ENCODE measurements at regions of chr9 and their contacts with region 1.

Region 1: DNA sequence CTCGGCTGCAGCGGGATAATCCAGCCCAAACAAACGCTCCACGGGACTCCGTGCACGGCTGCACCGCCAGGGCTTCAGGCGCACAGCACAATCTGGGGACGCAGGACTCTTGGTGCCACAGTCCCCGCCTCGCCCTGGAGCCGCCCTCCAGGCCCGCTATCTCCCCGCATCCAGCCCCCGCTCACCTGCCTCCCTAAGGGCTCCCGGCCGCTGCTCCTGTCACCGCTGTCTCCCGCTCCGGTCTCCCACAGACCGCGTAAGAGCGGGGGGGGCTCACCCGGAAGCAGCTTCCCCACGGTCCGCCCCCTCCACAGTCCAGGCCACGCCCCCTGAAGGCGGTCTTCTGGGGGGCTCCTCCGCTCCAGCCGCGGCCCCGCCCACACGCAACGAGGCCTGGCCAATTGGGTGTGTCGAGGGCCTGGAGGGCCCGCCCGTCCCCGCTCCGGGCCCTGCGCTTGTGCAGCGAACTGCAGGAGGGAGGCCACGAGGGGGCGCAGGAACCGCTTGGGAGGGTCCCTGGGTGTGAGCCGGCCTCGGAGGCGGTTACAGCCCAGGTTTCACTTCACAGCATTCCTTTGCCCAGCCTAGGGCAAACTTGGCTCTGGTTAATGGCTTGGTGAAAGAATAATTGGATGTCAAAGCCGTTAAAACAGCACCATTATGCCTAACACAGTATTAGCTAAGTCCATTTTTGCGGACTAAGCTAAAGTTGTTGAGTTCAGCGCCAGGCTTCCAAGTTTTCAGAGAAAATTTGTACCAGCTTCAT is at the start of gene ALAD:
- DNase-seq: peak; percentile 99
- H3K4me3 ChIP-seq: peak within 1 kb of the TSS; percentile 65 to 89
- H3K27ac ChIP-seq: peak within 1 kb of the TSS; percentile 54 to 76
- H3K4me1 ChIP-seq: no peaks in the 10 kb centered on the region
- H3K27me3 ChIP-seq: no peaks in the 10 kb centered on the region
- CTCF ChIP-seq: peak; percentile 91 to 98 (median 94)
- POLR2A ChIP-seq: peak; percentile 69
- total RNA-seq, gene ALAD: 59.8 to 103 TPM

Region 2: DNA sequence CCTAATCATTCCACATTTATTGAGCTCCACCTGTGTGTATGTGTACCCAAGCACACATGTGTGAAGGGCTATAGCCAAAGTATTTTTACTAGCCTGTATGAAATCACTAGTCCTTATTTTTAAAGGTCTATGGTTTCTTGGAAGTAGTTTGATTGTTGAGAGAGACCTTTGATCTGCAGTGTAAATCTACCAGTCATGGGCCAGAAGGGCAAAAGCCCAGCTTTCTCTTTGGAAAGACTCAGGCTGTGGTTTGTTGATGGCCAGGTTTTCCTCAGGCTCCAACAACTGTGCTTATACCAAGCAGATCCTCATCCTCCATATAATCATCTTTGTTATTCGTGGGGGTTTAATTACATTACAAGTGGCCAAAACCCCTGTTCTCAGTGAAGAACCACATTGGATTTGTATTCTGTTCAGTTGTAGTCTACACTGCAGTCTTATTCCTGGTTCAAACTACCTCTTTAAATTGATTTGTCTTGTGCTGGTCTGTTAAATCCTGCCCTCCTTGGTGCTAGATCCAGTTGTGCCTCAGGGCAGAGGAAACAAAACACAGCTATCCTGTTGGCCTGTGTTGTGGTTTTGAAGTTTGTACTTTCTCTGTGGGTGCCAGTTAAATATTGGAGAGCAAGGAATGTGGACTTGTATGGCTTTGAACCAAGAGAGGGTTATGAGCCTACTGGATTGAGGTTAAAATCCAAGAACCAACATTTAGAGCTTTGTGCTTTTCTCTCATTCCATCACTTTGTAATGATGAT is 139.1 kb before region 1 on chr9:
- intact Hi-C with region 1: no loop called
- DNase-seq: peak; percentile 13
- H3K4me3 ChIP-seq: no peak overlapping the region
- H3K27ac ChIP-seq: peak overlapping the region in 1 of 2 donors; percentile 30
- H3K4me1 ChIP-seq: no peaks in the 10 kb centered on the region
- H3K27me3 ChIP-seq: no peaks in the 10 kb centered on the region
- CTCF ChIP-seq: no peak
- POLR2A ChIP-seq: no peak

Region 3: DNA sequence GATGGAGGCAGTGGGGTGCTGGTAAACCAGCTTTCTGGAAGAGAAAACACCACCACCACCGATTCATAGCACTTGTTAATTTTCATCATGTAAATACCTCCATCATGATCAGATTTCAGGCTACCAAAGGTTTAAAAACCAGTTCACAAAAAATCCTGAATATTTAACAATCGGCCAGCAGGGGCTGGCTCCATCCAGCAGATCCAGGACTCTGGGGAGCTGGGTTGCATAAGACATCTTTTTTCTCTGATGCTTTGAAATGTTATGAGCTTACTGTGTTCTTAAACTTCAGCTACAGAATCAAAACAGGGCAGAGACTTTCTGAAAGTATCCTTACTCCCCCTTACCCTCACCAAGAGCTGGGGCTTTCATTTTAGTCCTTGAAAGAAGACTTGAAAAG is 83.4 kb before region 1 on chr9:
- intact Hi-C with region 1: loop called (anchors 10 kb)
- DNase-seq: no peak
- H3K4me3 ChIP-seq: no peak overlapping the region
- H3K27ac ChIP-seq: no peak overlapping the region
- H3K4me1 ChIP-seq: no peaks in the 10 kb centered on the region
- H3K27me3 ChIP-seq: no peaks in the 10 kb centered on the region
- CTCF ChIP-seq: no peak
- POLR2A ChIP-seq: no peak